ENCODE measurements at regions of chr10 and their contacts with region 1.

Region 1: GRCh38 chr10:104777086-104777799 is 136.2 kb downstream of the SORCS3 start:
- DNase-seq: no peak
- ATAC-seq: peak in 1 of 8 donors; percentile 53
- H3K4me3 ChIP-seq: no peak overlapping the region
- H3K27ac ChIP-seq: no peak overlapping the region
- H3K4me1 ChIP-seq: no peaks in the 10 kb centered on the region
- H3K27me3 ChIP-seq: peaks cover 0 to 10% (median 0%) of the 10 kb centered on the region in 7 donors
- CTCF ChIP-seq: peak in 8 of 9 donors; percentile 24 to 53 (median 28)

Region 2: GRCh38 chr10:104650072-104650471 is 127.2 kb before region 1 on chr10:
- intact Hi-C with region 1: loop called in 7 of 10 experiments (anchors 2 to 10 kb)
- DNase-seq: no peak
- ATAC-seq: peak in 4 of 8 donors; percentile 33 to 62 (median 46)
- H3K4me3 ChIP-seq: no peak overlapping the region
- H3K27ac ChIP-seq: no peak overlapping the region
- H3K4me1 ChIP-seq: no peaks in the 10 kb centered on the region
- H3K27me3 ChIP-seq: peaks cover 0 to 45% (median 20%) of the 10 kb centered on the region in 7 donors
- CTCF ChIP-seq: peak in 8 of 9 donors; percentile 14 to 55 (median 45)

Region 3: GRCh38 chr10:104666106-104666505 is 111.1 kb before region 1 on chr10:
- intact Hi-C with region 1: loop called in 1 of 10 experiments (anchors 10 kb)
- DNase-seq: no peak
- ATAC-seq: no peak
- H3K4me3 ChIP-seq: no peak overlapping the region
- H3K27ac ChIP-seq: no peak overlapping the region
- H3K4me1 ChIP-seq: no peaks in the 10 kb centered on the region
- H3K27me3 ChIP-seq: peaks cover 0 to 5% (median under 1%) of the 10 kb centered on the region in 7 donors
- CTCF ChIP-seq: no peak

Region 4: DNA sequence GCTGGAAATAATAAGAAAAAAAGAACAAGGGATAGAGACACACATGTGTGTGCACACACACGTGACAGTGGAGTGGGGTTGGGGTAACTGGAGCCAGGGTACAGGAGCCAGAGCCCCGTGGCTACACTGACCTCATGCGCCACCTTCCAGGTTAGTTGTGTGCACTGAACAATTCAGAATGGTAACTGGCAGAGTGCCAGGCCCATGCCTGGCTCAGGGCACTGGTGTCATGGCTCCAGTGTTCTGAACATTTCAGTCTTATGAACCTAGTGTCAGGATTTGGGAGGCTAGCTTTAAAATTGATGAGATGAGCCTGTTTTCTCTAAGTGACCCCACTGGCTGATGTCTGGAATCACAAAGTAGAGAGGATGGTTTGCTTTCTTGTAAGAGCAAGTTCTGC is 133.5 kb after region 1 on chr10:
- intact Hi-C with region 1: no loop called
- DNase-seq: no peak
- ATAC-seq: no peak
- H3K4me3 ChIP-seq: no peak overlapping the region
- H3K27ac ChIP-seq: no peak overlapping the region
- H3K4me1 ChIP-seq: no peaks in the 10 kb centered on the region
- H3K27me3 ChIP-seq: peaks cover 0 to 6% (median 0%) of the 10 kb centered on the region in 7 donors
- CTCF ChIP-seq: no peak

Region 5: GRCh38 chr10:105138358-105138757 is 361.1 kb after region 1 on chr10:
- intact Hi-C with region 1: no loop called
- DNase-seq: peak in 1 of 2 donors; percentile 55
- ATAC-seq: peak in 6 of 8 donors; percentile 30 to 79 (median 74)
- H3K4me3 ChIP-seq: no peak overlapping the region
- H3K27ac ChIP-seq: peak overlapping the region in 3 of 10 donors; percentile 4 to 48 (median 25)
- H3K4me1 ChIP-seq: no peaks in the 10 kb centered on the region
- H3K27me3 ChIP-seq: no peaks in the 10 kb centered on the region
- CTCF ChIP-seq: no peak

Measured in heart right ventricle (tissue), 16 donors.